ENCODE measurements at regions of chr4 and their contacts with region 1.

Region 1: DNA sequence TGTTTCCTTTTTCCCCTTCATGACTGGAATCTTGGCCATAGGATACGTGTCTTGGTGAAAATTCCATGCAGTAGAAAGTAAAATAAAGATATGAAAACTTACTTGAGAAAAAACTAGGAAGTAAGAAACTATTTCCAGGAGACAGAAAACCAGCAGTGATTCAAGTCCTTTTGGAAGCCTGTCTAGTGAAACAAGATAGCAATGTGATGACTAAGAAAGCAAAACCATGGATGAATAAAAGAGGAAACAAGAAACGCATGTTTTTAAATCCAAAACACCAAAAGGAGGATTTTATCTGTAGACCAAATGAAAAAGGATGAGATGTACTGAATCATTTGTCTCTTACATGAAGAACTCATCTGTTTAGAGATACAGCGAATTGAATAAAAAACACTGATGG is 1430.0 kb downstream of the ARAP2 start:
- DNase-seq: no peak
- ATAC-seq: no peak
- H3K4me3 ChIP-seq: no peak overlapping the region
- H3K27ac ChIP-seq: no peak overlapping the region
- H3K4me1 ChIP-seq: no peaks in the 10 kb centered on the region
- H3K27me3 ChIP-seq: no peaks in the 10 kb centered on the region
- CTCF ChIP-seq: no peak
- POLR2A ChIP-seq: no peak
- RAD21 ChIP-seq: no peak

Region 2: GRCh38 chr4:35342833-35343232 is 528.6 kb after region 1 on chr4:
- CTCF ChIA-PET with region 1: no interaction called
- POLR2A ChIA-PET with region 1: no interaction called
- RAD21 ChIA-PET with region 1: no interaction called
- intact Hi-C with region 1: no loop called
- DNase-seq: no peak
- ATAC-seq: no peak
- H3K4me3 ChIP-seq: no peak overlapping the region
- H3K27ac ChIP-seq: no peak overlapping the region
- H3K4me1 ChIP-seq: no peaks in the 10 kb centered on the region
- H3K27me3 ChIP-seq: no peaks in the 10 kb centered on the region
- CTCF ChIP-seq: no peak
- POLR2A ChIP-seq: no peak
- RAD21 ChIP-seq: no peak

Region 3: DNA sequence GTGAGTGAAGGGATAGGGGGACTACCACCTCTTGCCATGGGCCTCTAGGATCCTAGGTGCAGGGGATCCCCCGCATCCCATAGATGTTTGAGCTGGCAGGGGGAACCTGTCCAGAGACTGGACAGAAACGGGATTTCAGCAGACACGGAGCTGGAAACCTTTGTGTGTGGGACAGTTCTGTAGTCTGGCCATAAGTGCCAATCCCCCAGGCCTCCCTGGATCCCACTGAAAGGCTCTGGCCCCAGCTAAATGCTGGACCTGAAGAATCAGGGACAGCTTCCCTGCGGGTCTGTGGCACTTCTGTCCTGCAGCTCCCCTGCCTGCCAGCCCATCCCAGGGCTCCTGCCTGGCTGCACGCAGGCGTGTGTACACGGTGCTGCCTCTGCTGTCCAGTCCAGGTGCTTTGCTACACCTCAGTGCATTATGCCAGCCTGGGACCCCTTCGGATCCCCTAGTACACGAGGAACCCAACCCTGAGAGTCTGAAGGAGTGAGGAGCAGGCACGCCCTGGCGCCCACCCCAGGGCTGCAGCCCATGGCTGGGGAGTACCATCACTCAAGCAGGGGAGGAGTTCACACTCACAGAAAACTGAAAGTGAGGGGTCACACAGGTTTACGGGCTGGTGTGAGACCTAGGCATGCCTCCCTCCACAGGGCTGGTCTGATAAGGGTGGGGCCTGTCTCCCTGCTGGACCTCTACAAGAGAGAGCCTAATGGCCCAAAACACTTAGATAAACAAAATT is 727.1 kb after region 1 on chr4:
- CTCF ChIA-PET with region 1: no interaction called
- POLR2A ChIA-PET with region 1: no interaction called
- RAD21 ChIA-PET with region 1: no interaction called
- intact Hi-C with region 1: no loop called
- DNase-seq: no peak
- ATAC-seq: no peak
- H3K4me3 ChIP-seq: no peak overlapping the region
- H3K27ac ChIP-seq: no peak overlapping the region
- H3K4me1 ChIP-seq: peaks cover 0 to 10% of the 10 kb centered on the region in 2 experiments; a peak in 2 of 4 replicates
- H3K27me3 ChIP-seq: no peaks in the 10 kb centered on the region
- CTCF ChIP-seq: no peak
- POLR2A ChIP-seq: no peak
- RAD21 ChIP-seq: no peak

Region 4: GRCh38 chr4:36303426-36304137 is 1489.3 kb after region 1 on chr4:
- CTCF ChIA-PET with region 1: no interaction called
- POLR2A ChIA-PET with region 1: no interaction called
- RAD21 ChIA-PET with region 1: no interaction called
- intact Hi-C with region 1: loop called (anchors 5 kb)
- DNase-seq: no peak
- ATAC-seq: no peak
- H3K4me3 ChIP-seq: no peak overlapping the region
- H3K27ac ChIP-seq: no peak overlapping the region
- H3K4me1 ChIP-seq: no peaks in the 10 kb centered on the region
- H3K27me3 ChIP-seq: no peaks in the 10 kb centered on the region
- CTCF ChIP-seq: no peak
- POLR2A ChIP-seq: no peak
- RAD21 ChIP-seq: no peak

Measured in HCT116 (cell line).